ENCODE measurements at regions of chr16 and their contacts with region 1.

Region 1: DNA sequence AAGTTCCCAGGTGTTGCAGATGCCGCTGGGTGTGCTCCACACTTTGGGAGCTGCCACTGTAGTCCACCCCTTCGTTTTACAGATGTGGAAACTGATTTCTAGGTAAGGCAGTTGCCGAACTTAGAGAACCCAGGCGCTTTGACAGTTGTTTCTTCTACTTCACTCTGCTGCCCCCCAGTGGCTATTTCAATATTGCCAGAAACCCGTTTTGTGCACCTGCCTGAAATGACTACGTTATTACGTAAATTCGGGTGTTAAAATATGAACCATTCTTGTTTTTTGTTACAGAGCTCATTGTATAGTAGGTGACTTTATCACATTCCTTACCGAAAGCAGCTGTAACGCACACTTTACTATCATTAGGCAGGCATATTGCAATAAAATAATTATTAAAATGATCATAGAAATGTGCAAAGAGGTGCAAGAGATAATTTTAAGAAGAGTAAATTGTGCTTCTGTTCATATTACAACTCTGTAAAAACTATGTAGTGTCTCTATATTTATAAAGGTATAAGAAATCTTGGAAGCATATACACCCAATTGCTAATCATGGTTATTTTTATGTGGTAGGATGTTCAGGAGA is 44.9 kb downstream of the OTOA start:
- DNase-seq: peak; percentile 86
- H3K4me3 ChIP-seq: no peak overlapping the region
- H3K27ac ChIP-seq: no peak overlapping the region
- H3K4me1 ChIP-seq: peaks cover 10% of the 10 kb centered on the region
- CTCF ChIP-seq: peak; percentile 97

Region 2: DNA sequence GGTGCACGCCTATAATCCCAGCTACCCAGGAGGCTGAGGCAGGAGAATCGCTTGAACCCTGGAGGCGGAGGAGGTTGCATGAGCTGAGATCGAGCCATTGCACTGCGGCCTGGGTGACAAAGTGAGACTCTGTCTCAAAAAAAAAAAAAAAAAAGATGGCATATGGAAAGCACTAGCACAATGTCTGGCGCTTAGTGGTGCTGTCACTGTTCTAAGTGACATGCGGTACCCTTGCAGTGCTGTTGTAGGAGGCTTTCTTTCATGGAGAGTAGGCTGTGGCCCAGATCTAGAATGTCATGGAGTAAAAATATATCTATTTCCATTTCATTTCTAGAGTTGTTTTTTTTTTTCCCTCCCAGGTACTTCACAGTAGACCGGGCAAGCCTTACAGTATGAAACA is 123.8 kb before region 1 on chr16:
- CTCF ChIA-PET with region 1: no interaction called
- POLR2A ChIA-PET with region 1: no interaction called
- intact Hi-C with region 1: loop called (anchors 1 kb)
- DNase-seq: peak; percentile 22
- H3K4me3 ChIP-seq: no peak overlapping the region
- H3K27ac ChIP-seq: no peak overlapping the region
- H3K4me1 ChIP-seq: peaks cover 13% of the 10 kb centered on the region
- CTCF ChIP-seq: no peak

Region 3: DNA sequence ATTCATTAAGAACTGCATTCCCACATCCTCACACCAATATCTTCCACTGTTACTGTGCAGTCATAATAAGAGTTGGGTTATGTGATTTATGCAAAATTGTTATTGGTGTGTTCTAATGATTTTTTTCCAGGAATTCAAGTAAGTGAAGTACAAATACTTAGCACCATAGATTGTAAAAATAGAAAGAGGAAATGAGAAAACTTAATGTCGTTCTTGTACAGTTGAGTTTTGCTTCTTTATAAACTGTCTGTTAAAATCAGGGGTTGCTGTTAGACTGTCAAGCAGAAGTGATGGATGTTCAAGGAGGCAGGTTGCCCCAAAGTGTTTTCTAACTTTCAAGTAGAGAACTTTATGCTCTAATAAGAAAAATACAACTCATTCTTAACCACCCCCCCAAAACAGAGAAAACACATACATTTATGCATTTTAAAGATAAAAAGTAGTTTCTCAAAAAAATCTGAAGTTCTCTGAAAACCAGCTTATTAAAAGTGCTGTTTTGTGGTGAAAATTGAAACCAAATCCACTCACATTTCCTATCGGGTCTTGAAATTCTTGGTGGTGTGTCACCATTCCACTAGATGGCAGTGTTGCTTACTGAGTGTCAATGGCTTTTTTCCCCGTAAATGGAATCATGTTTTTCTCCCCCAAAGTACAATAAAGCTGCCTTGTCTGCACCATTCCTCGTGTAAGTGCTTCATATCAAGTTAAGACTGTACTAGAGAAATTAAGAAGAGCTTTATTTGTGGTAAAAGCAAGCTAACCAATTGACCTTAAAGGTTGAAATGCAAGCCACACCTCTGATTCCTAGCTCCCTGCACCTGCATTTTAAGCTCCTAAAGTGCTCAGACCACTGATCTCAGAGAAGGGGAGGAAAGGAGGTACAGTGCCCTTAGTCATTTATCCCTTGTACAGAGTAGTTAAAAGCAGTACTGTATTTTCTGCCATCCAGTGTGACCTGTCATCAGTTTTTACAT is 51.5 kb before region 1 on chr16:
- CTCF ChIA-PET with region 1: interaction called, 3 read pairs
- POLR2A ChIA-PET with region 1: interaction called, 3 read pairs
- intact Hi-C with region 1: loop called (anchors 1 kb)
- DNase-seq: peak; percentile 80
- H3K4me3 ChIP-seq: peak overlapping the region; percentile 45
- H3K27ac ChIP-seq: peak overlapping the region; percentile 91
- H3K4me1 ChIP-seq: peaks cover 80% of the 10 kb centered on the region
- CTCF ChIP-seq: peak; percentile 99